Endothelial cell of umbilical vein (primary cell): ENCODE measurements at regions of chr13 and their contacts with region 1.

Region 1: GRCh38 chr13:113208424-113209335 is at the start of gene PCID2:
- DNase-seq: peak; percentile 85
- H3K4me3 ChIP-seq: peak within 1 kb of the TSS; percentile 73 to 92 (median 91)
- H3K27ac ChIP-seq: peak within 1 kb of the TSS; percentile 98
- H3K4me1 ChIP-seq: peaks cover 19% of the 10 kb centered on the region
- H3K27me3 ChIP-seq: no peaks in the 10 kb centered on the region
- CTCF ChIP-seq: no peak
- POLR2A ChIP-seq: peak; percentile 78
- total RNA-seq, gene PCID2: 48.5 and 55.6 TPM in 2 replicates

Region 2: DNA sequence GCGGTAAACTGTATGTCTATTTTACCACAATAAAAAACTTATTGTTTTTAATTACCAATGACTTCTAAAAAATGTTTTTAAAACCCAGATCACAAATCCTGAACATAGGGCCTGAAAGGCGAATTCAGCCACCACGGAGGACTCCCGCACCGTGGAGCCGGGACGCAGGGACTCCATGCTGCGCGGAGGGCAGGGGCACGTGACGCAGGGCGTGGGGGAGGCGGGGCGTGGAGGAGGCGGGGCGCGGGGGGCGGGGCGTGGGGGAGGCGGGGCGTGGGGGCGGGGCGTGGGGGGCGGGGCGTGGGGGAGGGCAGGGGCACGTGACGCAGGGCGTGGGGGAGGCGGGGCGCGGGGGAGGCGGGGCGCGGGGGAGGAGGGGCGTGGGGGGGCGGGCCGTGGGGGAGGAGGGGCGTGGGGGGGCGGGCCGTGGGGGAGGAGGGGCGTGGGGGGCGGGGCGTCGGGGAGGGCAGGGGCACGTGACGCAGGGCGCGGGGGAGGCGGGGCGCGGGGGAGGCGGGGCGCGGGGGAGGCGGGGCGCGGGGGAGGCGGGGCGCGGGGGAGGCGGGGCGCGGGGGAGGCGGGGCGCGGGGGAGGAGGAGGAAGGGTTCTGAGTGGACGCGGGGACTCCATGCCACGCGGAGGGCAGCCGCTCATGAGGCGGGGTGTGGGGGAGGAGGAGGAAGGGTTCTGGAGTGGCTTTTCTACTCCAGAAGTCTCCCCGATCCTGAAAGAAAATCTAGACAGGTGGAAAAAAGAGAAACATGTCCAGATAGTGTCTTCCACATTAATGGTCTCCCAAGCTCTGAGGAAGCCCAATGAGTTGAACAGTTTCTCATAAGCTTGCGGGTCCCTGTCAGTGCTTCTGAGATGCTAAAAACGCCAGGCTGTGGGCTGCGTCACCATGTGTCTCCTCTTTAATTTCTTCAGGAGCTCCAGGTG is 54.6 kb before region 1 on chr13:
- CTCF ChIA-PET with region 1: interaction called, 3 read pairs
- POLR2A ChIA-PET with region 1: no interaction called
- dilution Hi-C with region 1: no loop called
- intact Hi-C with region 1: loop called (anchors 1 kb)
- DNase-seq: peak; percentile 62
- H3K4me3 ChIP-seq: peak overlapping the region in 2 of 3 experiments; percentile 22 to 41
- H3K27ac ChIP-seq: no peak overlapping the region
- H3K4me1 ChIP-seq: peaks cover 6% of the 10 kb centered on the region
- H3K27me3 ChIP-seq: peaks cover 2 to 9% of the 10 kb centered on the region in 2 experiments
- CTCF ChIP-seq: no peak
- POLR2A ChIP-seq: peak; percentile 90

Region 3: GRCh38 chr13:113169277-113170272 is 39.1 kb before region 1 on chr13:
- CTCF ChIA-PET with region 1: no interaction called
- POLR2A ChIA-PET with region 1: no interaction called
- dilution Hi-C with region 1: no loop called
- intact Hi-C with region 1: loop called (anchors 1 kb)
- DNase-seq: no peak
- H3K4me3 ChIP-seq: no peak overlapping the region
- H3K27ac ChIP-seq: peak overlapping the region; percentile 27
- H3K4me1 ChIP-seq: peaks cover 24% of the 10 kb centered on the region
- H3K27me3 ChIP-seq: no peaks in the 10 kb centered on the region
- CTCF ChIP-seq: no peak
- POLR2A ChIP-seq: no peak

Region 4: DNA sequence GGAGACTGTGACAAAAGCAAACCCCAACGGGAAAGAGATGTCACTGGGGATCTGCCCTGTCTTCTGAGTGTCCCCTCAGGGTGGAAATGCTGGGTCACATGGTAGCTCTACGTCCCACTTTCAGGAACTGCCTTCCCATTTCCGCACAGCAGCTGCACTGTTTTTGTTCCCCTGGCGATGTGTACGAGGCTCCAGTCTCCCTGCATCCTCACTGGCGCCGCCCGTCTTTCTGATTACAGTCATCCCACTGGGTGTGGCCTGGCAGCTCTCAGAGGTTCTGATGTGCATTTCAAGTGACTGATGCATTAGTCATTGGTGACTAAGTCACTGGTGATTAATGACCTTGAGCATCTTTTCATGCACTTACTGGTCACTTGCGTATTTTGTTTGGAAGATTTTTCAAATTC is 21.4 kb before region 1 on chr13:
- CTCF ChIA-PET with region 1: interaction called, 4 read pairs
- POLR2A ChIA-PET with region 1: interaction called, 6 read pairs
- dilution Hi-C with region 1: no loop called
- intact Hi-C with region 1: loop called (anchors 1 kb)
- DNase-seq: peak; percentile 96
- H3K4me3 ChIP-seq: peak overlapping the region in 1 of 3 experiments; percentile 29
- H3K27ac ChIP-seq: peak overlapping the region; percentile 89
- H3K4me1 ChIP-seq: peaks cover 49% of the 10 kb centered on the region
- H3K27me3 ChIP-seq: no peaks in the 10 kb centered on the region
- CTCF ChIP-seq: no peak
- POLR2A ChIP-seq: peak; percentile 73